HEK293 (cell line): ENCODE measurements at regions of chr7 and their contacts with region 1.

Region 1: DNA sequence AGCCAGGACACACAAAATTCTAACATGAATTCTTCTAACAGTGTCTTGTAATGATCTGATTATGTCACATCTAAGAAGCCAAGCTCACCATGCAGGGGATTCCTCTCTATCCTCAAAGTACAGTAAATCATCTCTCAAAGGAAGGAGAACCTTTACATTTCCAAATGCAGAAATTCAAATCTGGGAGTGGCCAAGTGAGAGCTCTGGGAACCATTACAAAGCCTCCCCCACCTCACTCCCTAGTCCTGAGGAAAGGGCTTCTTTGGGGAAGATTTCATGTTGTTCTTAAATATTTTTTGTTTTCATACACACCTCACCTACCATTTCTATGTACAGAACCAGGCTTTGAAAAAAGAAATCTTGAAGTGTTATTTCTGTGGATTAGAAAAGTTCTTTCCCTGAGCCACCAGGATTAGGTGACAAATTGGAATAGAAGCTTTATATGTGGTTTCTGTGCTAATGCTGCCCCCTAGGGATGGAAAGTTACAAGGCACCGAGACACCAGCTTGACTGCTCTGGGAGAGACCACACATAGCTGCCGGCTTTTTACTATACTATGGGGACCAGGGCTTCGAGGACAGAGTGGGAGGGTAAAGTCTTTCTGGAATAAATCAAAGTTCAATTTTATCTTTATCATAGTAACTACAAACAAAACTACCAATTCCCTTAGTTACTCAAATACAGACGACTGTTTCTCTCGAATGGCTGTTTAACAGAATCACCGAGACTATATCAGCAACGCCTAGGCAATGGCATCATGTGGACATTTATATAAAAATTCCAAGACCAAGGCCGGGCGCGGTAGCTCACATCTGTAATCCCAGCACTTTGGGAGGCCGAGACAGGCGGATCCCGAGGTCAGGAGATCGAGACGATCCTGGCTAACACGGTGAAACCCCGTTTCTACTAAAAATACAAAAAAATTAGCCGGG is 116.1 kb downstream of the RNF216 start:
- H3K4me3 ChIP-seq: no peak overlapping the region
- H3K27ac ChIP-seq: no peak overlapping the region
- H3K4me1 ChIP-seq: no peaks in the 10 kb centered on the region
- CTCF ChIP-seq: peak; percentile 47; the same call in 1 of the 2 replicates

Region 2: DNA sequence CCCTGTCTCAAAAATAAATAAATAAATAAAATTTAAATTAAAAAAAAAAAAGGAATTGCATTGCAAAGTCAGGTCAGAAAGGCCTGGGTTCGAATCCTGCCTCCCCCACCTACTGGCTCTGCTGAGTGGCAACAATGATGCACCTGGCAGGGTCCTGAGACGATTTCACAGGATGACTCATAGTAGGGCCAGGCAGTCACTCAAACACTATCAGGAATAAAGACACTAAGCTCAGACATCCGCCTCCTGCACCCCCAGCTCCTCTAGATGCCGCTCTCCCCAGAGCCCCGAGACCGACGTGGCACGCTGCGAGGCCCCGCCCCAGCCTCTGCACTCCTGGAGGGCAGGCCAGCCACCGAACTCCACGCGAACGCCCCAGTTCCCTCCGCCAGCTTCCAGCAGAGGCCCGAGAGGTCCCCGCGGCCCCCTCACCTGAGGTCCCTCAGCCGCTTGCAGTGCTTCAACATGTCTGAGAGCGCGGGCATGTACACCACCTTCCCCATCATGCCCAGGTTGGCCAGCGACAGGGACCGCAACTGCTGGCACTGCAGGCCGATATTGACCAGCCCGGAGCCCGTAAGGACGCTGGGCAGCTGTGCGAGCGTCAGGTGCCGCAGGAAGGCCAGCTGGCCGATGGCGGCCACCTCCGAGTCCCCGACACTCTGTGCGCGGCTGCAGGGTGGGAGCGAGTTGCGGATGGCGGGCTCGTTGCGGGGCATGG is 165.1 kb before region 1 on chr7:
- CTCF ChIA-PET with region 1: interaction called, 69 read pairs
- POLR2A ChIA-PET with region 1: no interaction called
- H3K4me3 ChIP-seq: no peak overlapping the region
- H3K27ac ChIP-seq: no peak overlapping the region
- H3K4me1 ChIP-seq: no peaks in the 10 kb centered on the region
- CTCF ChIP-seq: no peak

Region 3: GRCh38 chr7:5629941-5630340 is 35.4 kb before region 1 on chr7:
- CTCF ChIA-PET with region 1: interaction called, 17 read pairs
- POLR2A ChIA-PET with region 1: no interaction called
- H3K4me3 ChIP-seq: no peak overlapping the region
- H3K27ac ChIP-seq: no peak overlapping the region
- H3K4me1 ChIP-seq: peaks cover 2% of the 10 kb centered on the region; the same call in 1 of the 2 replicates
- CTCF ChIP-seq: no peak

Region 4: GRCh38 chr7:5653661-5654060 is 11.7 kb before region 1 on chr7:
- CTCF ChIA-PET with region 1: interaction called, 15 read pairs
- POLR2A ChIA-PET with region 1: no interaction called
- H3K4me3 ChIP-seq: no peak overlapping the region
- H3K27ac ChIP-seq: no peak overlapping the region
- H3K4me1 ChIP-seq: no peaks in the 10 kb centered on the region
- CTCF ChIP-seq: no peak

Region 5: GRCh38 chr7:5677538-5678294 is 12.4 kb after region 1 on chr7:
- CTCF ChIA-PET with region 1: interaction called, 46 read pairs
- POLR2A ChIA-PET with region 1: no interaction called
- H3K4me3 ChIP-seq: no peak overlapping the region
- H3K27ac ChIP-seq: no peak overlapping the region
- H3K4me1 ChIP-seq: no peaks in the 10 kb centered on the region
- CTCF ChIP-seq: peak; percentile 41; the same call in 1 of the 2 replicates

Region 6: DNA sequence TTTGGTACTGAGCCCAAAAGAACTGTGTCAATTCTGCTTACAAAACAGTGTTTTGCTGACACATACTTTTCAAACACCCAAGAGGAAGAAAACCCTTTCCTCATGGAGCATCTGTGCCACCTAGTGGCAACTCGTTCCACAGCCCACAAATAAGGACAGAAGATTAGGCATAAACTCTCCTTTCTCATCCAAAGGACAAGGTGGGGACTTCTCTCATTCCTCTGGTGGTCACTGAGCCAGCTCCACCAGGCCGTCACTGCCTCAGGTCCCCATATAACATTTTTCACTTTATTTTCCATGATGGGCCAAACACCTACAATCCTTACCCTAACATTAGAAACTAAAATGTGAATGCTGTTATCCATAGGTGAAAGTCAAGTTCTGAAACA is 39.2 kb after region 1 on chr7:
- CTCF ChIA-PET with region 1: interaction called, 14 read pairs
- POLR2A ChIA-PET with region 1: no interaction called
- H3K4me3 ChIP-seq: no peak overlapping the region
- H3K27ac ChIP-seq: no peak overlapping the region
- H3K4me1 ChIP-seq: no peaks in the 10 kb centered on the region; the same call in 1 of the 2 replicates
- CTCF ChIP-seq: no peak; the same call in 1 of the 2 replicates